Prostate gland (tissue), 2 donors: ENCODE measurements at regions of chr11 and their contacts with region 1.

Region 1: GRCh38 chr11:66069715-66070603 is at the start of gene PACS1:
- DNase-seq: peak; percentile 58
- H3K4me3 ChIP-seq: peak within 1 kb of the TSS; percentile 76 to 93
- H3K27ac ChIP-seq: peak within 1 kb of the TSS; percentile 87 to 95
- H3K4me1 ChIP-seq: peaks cover 5% of the 10 kb centered on the region
- H3K27me3 ChIP-seq: no peaks in the 10 kb centered on the region
- CTCF ChIP-seq: no peak
- POLR2A ChIP-seq: peak; percentile 27
- total RNA-seq, gene PACS1: 51.9 to 107 TPM

Region 2: DNA sequence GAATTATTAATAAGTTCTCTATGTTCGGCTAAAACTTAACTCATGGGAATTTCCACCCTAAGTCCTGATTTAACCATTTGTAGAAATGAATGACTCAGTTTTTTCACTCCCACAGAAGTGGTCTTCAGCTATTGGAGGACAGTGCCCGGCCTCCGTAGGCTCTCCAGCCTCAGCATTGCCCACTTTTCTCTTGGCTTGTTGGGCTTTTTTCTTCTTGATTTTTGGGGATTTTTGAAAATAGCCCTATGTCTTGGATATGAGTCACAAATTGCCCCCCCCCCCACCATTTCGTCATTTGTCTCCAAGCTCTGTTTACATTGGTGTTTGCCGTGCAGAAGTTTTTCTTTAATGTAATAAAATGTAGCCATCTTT is 66.8 kb after region 1 on chr11:
- intact Hi-C with region 1: loop called (anchors 10 kb)
- DNase-seq: no peak
- H3K4me3 ChIP-seq: no peak overlapping the region
- H3K27ac ChIP-seq: no peak overlapping the region
- H3K4me1 ChIP-seq: no peaks in the 10 kb centered on the region
- H3K27me3 ChIP-seq: no peaks in the 10 kb centered on the region
- CTCF ChIP-seq: no peak
- POLR2A ChIP-seq: no peak